CD8-positive, alpha-beta T cell (primary cell): ENCODE measurements at regions of chr11 and their contacts with region 1.

Region 1: GRCh38 chr11:75867775-75868374 is 52.9 kb downstream of the UVRAG start:
- DNase-seq: peak in 7 of 9 experiments; percentile 24 to 74 (median 53)
- ATAC-seq: peak; percentile 61
- H3K4me3 ChIP-seq: no peak overlapping the region
- H3K4me3 Mint-ChIP-seq: no peak overlapping the region
- H3K27ac ChIP-seq: no peak overlapping the region
- H3K27ac Mint-ChIP-seq: no peak overlapping the region
- H3K4me1 ChIP-seq: no peaks in the 10 kb centered on the region
- H3K4me1 Mint-ChIP-seq: peaks cover 2% of the 10 kb centered on the region
- H3K27me3 ChIP-seq: no peaks in the 10 kb centered on the region
- H3K27me3 Mint-ChIP-seq: no peaks in the 10 kb centered on the region
- CTCF ChIP-seq: peak; percentile 90

Region 2: GRCh38 chr11:75547580-75548058 is 320.3 kb before region 1 on chr11:
- CTCF ChIA-PET with region 1: no interaction called
- POLR2A ChIA-PET with region 1: no interaction called
- intact Hi-C with region 1: loop called (anchors 5 kb)
- DNase-seq: peak in 5 of 9 experiments; percentile 28 to 63 (median 56)
- ATAC-seq: peak; percentile 54
- H3K4me3 ChIP-seq: no peak overlapping the region
- H3K4me3 Mint-ChIP-seq: no peak overlapping the region
- H3K27ac ChIP-seq: no peak overlapping the region
- H3K27ac Mint-ChIP-seq: no peak overlapping the region
- H3K4me1 ChIP-seq: no peaks in the 10 kb centered on the region
- H3K4me1 Mint-ChIP-seq: peaks cover 2% of the 10 kb centered on the region
- H3K27me3 ChIP-seq: peaks cover 0 to 3% of the 10 kb centered on the region in 2 experiments
- H3K27me3 Mint-ChIP-seq: peaks cover 4% of the 10 kb centered on the region
- CTCF ChIP-seq: peak; percentile 80

Region 3: DNA sequence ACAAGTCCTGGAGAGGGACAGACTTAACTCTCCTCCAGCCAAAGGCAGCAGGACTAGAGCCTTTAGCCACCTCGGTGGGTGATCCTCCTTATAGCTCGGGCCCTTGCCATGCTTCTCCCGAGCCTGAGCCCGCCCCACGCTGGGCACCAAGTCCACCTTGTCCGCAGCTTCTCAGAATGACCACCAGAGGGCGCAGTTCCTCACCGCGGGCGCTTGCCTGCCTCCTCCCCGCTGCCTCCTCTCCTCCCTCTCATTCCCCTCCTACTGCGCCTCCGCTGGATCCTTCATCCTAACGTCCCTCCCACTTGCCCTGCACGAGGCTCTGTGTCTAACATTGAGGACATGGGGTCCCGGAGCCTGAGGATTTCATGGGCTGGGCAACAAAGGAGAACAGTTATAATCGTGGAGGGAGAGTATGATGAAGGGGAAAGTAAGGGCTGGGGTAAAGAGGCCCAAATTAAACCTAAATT is 161.6 kb before region 1 on chr11:
- CTCF ChIA-PET with region 1: interaction called, 10 read pairs
- POLR2A ChIA-PET with region 1: no interaction called
- intact Hi-C with region 1: loop called (anchors 1 kb)
- DNase-seq: peak; percentile 32 to 77 (median 66)
- ATAC-seq: peak; percentile 78
- H3K4me3 ChIP-seq: no peak overlapping the region
- H3K4me3 Mint-ChIP-seq: no peak overlapping the region
- H3K27ac ChIP-seq: no peak overlapping the region
- H3K27ac Mint-ChIP-seq: no peak overlapping the region
- H3K4me1 ChIP-seq: peaks cover 6% of the 10 kb centered on the region
- H3K4me1 Mint-ChIP-seq: peaks cover 11% of the 10 kb centered on the region
- H3K27me3 ChIP-seq: no peaks in the 10 kb centered on the region
- H3K27me3 Mint-ChIP-seq: peaks cover 6% of the 10 kb centered on the region
- CTCF ChIP-seq: peak; percentile 90

Region 4: DNA sequence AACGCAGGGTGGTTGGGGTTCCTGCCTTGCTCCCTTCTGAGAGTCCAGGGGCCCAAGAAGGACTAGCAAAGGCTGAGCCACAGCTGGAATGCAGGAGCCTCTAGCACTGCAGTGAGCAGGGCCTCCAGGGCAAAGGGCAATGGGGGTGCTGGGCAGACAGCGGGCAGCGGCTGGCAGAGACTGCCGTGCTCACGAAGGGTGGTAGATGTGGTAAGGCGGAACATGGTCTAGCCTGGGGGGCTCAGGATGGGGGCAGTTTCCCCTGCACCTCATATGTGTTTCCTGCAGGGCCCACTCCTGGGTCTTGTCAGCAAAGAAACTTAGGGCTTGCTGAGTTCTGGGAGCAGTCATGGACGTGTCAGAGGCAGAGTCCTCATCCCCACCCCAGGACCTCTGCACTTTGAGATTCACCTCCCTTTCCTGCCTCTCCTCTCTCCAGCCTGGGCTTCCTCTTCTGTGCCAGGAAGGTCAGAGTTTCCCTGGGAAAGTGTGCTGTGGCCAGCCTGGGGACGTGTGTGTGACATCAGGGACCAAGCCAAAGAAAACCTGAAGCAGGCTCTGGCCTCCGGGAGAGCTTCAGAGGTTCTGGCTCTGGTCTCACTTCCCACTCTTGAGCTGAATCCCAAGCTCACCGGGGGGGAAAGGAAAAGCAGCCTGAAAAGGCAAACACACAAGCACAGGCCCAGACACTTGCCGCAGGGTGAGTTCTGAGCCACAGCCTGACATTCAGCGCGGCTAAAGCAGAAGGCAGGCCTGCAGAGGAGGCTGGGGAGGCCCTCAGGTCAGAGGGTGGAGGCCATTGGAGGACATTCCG is 145.8 kb before region 1 on chr11:
- CTCF ChIA-PET with region 1: interaction called, 6 read pairs
- POLR2A ChIA-PET with region 1: no interaction called
- intact Hi-C with region 1: loop called (anchors 5 kb)
- DNase-seq: no peak
- ATAC-seq: no peak
- H3K4me3 ChIP-seq: no peak overlapping the region
- H3K4me3 Mint-ChIP-seq: no peak overlapping the region
- H3K27ac ChIP-seq: no peak overlapping the region
- H3K27ac Mint-ChIP-seq: no peak overlapping the region
- H3K4me1 ChIP-seq: no peaks in the 10 kb centered on the region
- H3K4me1 Mint-ChIP-seq: no peaks in the 10 kb centered on the region
- H3K27me3 ChIP-seq: no peaks in the 10 kb centered on the region
- H3K27me3 Mint-ChIP-seq: no peaks in the 10 kb centered on the region
- CTCF ChIP-seq: no peak

Region 5: DNA sequence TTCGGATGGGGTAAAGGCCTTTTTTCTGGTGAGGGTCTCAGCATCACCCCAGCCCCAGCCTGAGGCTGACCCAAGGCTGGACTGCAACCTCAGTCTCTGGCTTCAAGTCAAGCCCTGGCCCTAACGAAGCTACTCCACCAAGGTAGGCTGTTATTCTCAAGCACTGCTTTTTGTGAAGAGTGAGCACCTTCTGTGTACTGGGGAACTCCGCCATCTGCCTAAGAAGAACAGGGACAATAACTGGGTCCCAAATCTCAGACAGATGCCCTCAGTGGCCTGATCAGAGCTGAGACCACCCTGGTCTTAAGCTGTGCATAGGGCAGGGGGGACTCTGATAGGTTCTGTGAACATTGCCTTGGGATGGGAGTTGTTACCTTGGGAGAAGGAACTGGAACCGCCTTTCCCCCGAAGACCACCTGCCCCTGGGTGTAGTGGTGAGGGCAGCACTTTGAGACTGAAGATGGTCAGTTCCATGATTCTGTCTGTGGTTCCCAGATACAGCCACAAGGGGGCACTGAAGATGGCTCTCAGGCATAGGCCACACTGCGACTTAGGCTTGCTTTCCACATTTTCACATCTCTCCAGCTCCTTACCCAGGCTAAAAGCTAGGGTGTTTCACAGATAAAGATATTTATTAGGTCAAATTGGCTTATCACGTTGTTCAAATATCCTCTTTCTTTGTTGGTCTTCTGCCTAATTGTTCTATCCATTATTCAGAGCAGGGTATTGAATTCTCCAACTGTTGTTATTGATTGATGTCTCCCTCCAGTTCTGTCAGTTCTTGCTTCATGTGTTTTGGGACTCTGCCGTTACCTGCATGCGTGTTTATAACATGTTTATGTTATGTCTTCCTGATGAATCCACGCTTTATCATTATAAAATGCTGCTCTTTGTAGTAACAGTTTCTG is 64.7 kb before region 1 on chr11:
- CTCF ChIA-PET with region 1: interaction called, 219 read pairs
- POLR2A ChIA-PET with region 1: no interaction called
- intact Hi-C with region 1: loop called (anchors 1 kb)
- DNase-seq: peak; percentile 51 to 80 (median 75)
- ATAC-seq: peak; percentile 98
- H3K4me3 ChIP-seq: no peak overlapping the region
- H3K4me3 Mint-ChIP-seq: no peak overlapping the region
- H3K27ac ChIP-seq: no peak overlapping the region
- H3K27ac Mint-ChIP-seq: no peak overlapping the region
- H3K4me1 ChIP-seq: no peaks in the 10 kb centered on the region
- H3K4me1 Mint-ChIP-seq: peaks cover 5% of the 10 kb centered on the region
- H3K27me3 ChIP-seq: no peaks in the 10 kb centered on the region
- H3K27me3 Mint-ChIP-seq: no peaks in the 10 kb centered on the region
- CTCF ChIP-seq: peak; percentile 91

Region 6: GRCh38 chr11:75888416-75888815 is 20.5 kb after region 1 on chr11:
- CTCF ChIA-PET with region 1: interaction called, 10 read pairs
- POLR2A ChIA-PET with region 1: no interaction called
- intact Hi-C with region 1: no loop called
- DNase-seq: no peak
- ATAC-seq: no peak
- H3K4me3 ChIP-seq: no peak overlapping the region
- H3K4me3 Mint-ChIP-seq: no peak overlapping the region
- H3K27ac ChIP-seq: no peak overlapping the region
- H3K27ac Mint-ChIP-seq: no peak overlapping the region
- H3K4me1 ChIP-seq: no peaks in the 10 kb centered on the region
- H3K4me1 Mint-ChIP-seq: peaks cover 4% of the 10 kb centered on the region
- H3K27me3 ChIP-seq: no peaks in the 10 kb centered on the region
- H3K27me3 Mint-ChIP-seq: no peaks in the 10 kb centered on the region
- CTCF ChIP-seq: no peak